HepG2 (cell line): ENCODE measurements at regions of chr1 and their contacts with region 1.

Region 1: DNA sequence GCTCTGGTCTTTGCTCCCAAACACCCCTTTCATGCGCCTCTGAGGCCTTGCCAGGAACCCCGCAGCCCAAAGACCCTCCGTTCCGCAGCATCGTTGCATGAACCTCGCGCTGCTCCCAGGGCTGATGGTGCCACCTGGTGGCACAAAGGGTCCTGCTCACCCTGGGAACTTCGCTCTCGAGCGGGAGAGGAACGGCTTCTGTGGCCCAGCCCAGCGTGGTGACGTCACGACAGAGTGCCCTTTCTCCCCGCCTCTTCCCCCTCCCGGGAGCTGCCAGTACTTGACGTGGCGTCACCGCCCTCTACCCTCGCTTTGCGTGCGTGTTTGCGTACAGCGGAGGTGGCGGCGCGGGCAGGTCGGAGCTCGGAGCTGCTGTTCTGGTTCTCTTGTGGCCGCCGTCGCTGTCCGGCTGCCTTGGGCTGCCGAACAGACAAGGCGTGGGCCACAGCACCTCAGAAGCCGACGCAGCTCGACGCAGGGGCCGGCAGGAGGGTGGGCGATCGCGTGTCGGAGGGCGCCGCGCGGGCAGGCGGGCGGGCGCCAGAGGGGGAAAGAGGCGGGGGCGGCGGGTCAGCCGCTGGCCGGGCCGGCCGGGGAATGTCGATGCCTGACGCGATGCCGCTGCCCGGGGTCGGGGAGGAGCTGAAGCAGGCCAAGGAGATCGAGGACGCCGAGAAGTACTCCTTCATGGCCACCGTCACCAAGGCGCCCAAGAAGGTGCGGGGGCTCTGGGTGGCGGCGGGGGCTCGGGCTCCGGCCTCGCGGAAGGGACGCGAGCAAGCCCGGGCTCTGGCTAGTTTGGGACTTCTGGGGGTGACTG is at the start of gene AHCYL1:
- DNase-seq: peak; percentile 95
- ATAC-seq: peak; percentile 90
- H3K4me3 ChIP-seq: peak within 1 kb of the TSS; percentile 81 to 94 (median 94)
- H3K27ac ChIP-seq: peak within 1 kb of the TSS; percentile 87
- H3K4me1 ChIP-seq: peaks cover 86% of the 10 kb centered on the region
- H3K27me3 ChIP-seq: no peaks in the 10 kb centered on the region; a peak in 1 of 5 replicates
- CTCF ChIP-seq: peak; percentile 100
- EP300 ChIP-seq: no peak; a peak in 1 of 4 replicates
- POLR2A ChIP-seq: peak; percentile 83 to 91
- RAD21 ChIP-seq: peak; percentile 98
- total RNA-seq, gene AHCYL1: 40.9 and 63.2 TPM in 2 replicates

Region 2: DNA sequence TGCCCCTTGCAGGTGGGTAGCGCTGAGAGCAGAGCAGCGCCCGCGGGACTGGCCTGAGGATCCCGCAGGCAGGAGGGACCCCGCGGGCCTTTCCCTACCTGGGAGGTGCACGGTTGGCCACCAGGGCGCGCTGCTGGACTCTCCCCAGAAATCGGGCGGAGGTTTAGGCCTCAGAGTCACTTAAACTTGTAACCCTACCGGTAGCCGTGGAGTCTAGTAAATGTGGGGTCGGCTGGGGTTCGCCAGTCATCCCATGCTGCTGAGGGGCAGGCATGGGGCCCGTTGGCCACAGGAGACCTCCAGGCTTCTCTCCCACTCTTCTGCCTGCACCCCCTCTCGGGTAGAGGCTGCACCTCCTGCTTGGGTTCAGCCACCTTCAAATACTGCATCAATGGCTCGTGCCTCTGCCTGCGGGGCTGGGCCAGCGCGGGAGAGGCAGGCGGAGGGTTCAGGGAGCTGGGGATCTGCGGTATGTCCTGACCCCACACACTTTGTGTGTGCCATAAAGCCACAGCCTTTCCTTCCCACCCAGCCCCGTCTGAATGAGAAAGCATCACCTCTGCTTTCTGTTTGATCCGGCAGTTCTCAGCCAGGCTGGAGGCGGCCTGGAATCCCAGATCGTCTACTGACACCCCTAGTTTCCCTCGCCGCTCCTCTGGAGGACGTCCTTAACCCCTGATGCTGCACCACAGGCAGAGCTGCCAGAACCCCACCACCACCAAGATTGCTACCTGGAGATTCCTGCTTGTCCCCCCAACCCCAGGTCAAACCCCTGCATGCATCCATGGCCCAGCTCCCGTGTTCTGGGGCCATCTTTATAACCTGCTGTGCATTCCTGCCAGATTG is 341.1 kb before region 1 on chr1:
- CTCF ChIA-PET with region 1: no interaction called
- POLR2A ChIA-PET with region 1: no interaction called
- in situ Hi-C with region 1: loop called (anchors 10 kb)
- intact Hi-C with region 1: no loop called
- DNase-seq: peak; percentile 67
- ATAC-seq: peak; percentile 92
- H3K4me3 ChIP-seq: peak overlapping the region; percentile 34 to 67 (median 48)
- H3K27ac ChIP-seq: no peak overlapping the region
- H3K4me1 ChIP-seq: peaks cover 23% of the 10 kb centered on the region
- H3K27me3 ChIP-seq: 0 out of 5 replicates have a peak, but pooled peaks cover 0 to 3% of the 10 kb centered on the region in 2 experiments
- CTCF ChIP-seq: peak; percentile 94
- EP300 ChIP-seq: 0 out of 4 replicates have a peak, but pooled peaks of 1 of the 2 experiments have one; percentile 5
- POLR2A ChIP-seq: no peak
- RAD21 ChIP-seq: peak; percentile 90

Region 3: DNA sequence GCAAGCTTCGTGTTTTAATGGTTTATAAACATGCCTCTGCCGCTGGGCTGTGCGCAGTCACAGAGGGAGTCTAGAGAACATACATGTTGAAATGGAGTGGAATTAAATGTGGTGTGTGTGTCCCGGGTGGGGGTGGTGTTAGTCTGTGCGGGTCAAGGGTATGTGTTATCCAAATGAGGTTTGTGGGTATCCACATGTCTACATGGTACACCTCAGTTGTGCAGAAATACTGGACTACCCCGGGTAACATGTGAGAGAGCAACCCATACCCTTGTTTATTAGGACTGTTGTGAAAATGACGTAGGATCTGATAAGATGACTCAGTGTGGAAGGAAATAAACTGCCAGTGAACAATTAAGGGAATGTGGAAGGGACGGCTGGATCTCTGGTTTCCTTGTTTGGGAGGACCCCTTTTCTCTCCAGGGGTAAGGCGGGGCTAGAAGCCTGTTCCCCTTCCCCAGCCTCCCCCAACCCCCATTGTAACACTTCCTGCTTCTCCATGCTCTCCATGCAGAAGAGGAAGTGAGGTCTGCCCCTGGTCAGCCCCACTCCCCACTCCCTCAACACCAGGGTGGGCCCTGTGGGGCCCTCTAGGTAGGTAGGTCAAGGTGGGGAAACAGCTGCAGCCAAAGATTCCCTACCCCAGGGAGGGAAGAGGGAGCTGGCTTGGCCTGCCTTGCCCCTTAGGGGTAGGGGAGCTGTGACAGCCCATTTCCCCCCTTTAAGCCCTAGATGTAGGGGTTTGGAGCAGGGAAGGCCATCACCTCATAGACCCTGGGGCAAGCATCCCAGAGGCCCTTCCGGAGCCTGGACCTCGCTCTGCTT is 221.6 kb before region 1 on chr1:
- CTCF ChIA-PET with region 1: no interaction called
- POLR2A ChIA-PET with region 1: interaction called, 15 read pairs
- in situ Hi-C with region 1: no loop called
- intact Hi-C with region 1: no loop called
- DNase-seq: no peak
- ATAC-seq: peak; percentile 2; the same call in 2 of the 3 replicates
- H3K4me3 ChIP-seq: peak overlapping the region; percentile 76 to 88 (median 79)
- H3K27ac ChIP-seq: peak overlapping the region; percentile 74
- H3K4me1 ChIP-seq: peaks cover 80% of the 10 kb centered on the region
- H3K27me3 ChIP-seq: no peaks in the 10 kb centered on the region; a peak in 2 of 5 replicates
- CTCF ChIP-seq: no peak
- EP300 ChIP-seq: no peak
- POLR2A ChIP-seq: no peak
- RAD21 ChIP-seq: no peak

Region 4: GRCh38 chr1:109790735-109791494 is 193.8 kb before region 1 on chr1:
- CTCF ChIA-PET with region 1: interaction called, 4 read pairs
- POLR2A ChIA-PET with region 1: interaction called, 4 read pairs
- in situ Hi-C with region 1: no loop called
- intact Hi-C with region 1: loop called (anchors 5 kb)
- DNase-seq: peak; percentile 70
- ATAC-seq: peak; percentile 68
- H3K4me3 ChIP-seq: peak overlapping the region in 2 of 3 experiments; percentile 1 to 54; a peak in 3 of 6 replicates
- H3K27ac ChIP-seq: peak overlapping the region; percentile 60
- H3K4me1 ChIP-seq: peaks cover 82% of the 10 kb centered on the region
- H3K27me3 ChIP-seq: no peaks in the 10 kb centered on the region
- CTCF ChIP-seq: peak; percentile 81
- EP300 ChIP-seq: no peak
- POLR2A ChIP-seq: no peak
- RAD21 ChIP-seq: peak; percentile 27; the same call in 1 of the 2 replicates

Region 5: DNA sequence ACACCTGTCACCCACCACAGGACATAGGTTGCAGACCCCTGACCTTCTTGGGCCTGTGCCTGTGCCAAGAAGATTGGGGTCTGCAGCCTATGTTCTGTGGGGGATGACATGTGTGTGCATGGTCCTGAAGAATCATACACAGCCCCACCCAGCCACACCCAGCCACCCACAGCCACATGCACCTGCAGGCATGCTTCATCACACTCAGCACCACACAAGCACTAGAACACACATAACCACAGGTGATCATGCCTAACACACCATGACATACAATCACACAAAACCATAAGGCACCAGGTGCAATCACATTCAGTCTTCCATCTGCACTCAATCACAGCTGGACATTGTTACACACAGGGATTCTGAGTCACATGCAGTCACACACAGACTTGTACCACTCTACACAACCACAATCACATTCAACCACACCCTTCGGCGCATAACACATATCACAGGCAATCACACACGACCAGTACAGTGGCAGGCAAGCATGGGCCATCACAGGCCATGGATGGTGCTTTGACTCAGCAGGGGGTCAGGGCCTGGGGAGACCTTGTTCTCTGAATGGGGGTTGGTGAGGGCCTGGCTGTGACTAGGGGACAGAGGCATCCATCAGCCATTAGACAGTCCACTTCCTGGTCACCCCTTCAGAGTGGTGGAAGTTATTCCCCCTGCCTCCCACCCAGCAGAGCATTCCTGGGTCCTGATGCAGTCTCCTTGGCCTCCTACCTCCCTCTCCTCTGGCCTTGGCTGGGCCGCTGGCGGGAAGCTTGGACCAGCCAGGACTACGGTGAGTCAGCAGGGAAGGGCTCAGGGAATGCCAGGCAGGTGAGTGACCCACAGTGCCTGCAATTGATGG is 176.6 kb before region 1 on chr1:
- CTCF ChIA-PET with region 1: no interaction called
- POLR2A ChIA-PET with region 1: no interaction called
- in situ Hi-C with region 1: no loop called
- intact Hi-C with region 1: no loop called
- DNase-seq: no peak
- ATAC-seq: peak; percentile 57
- H3K4me3 ChIP-seq: no peak overlapping the region
- H3K27ac ChIP-seq: no peak overlapping the region
- H3K4me1 ChIP-seq: no peaks in the 10 kb centered on the region
- H3K27me3 ChIP-seq: peaks cover 0 to 4% of the 10 kb centered on the region in 2 experiments; a peak in 2 of 5 replicates
- CTCF ChIP-seq: no peak
- EP300 ChIP-seq: no peak
- POLR2A ChIP-seq: no peak
- RAD21 ChIP-seq: no peak

Region 6: GRCh38 chr1:109931189-109931731 is 53.4 kb before region 1 on chr1:
- CTCF ChIA-PET with region 1: interaction called, 4 read pairs
- POLR2A ChIA-PET with region 1: interaction called, 14 read pairs
- in situ Hi-C with region 1: no loop called
- intact Hi-C with region 1: loop called (anchors 2 kb)
- DNase-seq: peak; percentile 82
- ATAC-seq: peak; percentile 76
- H3K4me3 ChIP-seq: peak overlapping the region in 2 of 3 experiments; percentile 17 to 31; a peak in 1 of 6 replicates
- H3K27ac ChIP-seq: peak overlapping the region; percentile 53
- H3K4me1 ChIP-seq: peaks cover 94% of the 10 kb centered on the region
- H3K27me3 ChIP-seq: no peaks in the 10 kb centered on the region
- CTCF ChIP-seq: no peak
- EP300 ChIP-seq: peak; percentile 45 to 80; a peak in 3 of 4 replicates
- POLR2A ChIP-seq: peak in 1 of 2 experiments; percentile 38; a peak in 1 of 4 replicates
- RAD21 ChIP-seq: peak; percentile 14; the same call in 1 of the 2 replicates